K562 (cell line): ENCODE measurements at regions of chr4 and their contacts with region 1.

Region 1: GRCh38 chr4:40325189-40326019 is 9.7 kb upstream of the CHRNA9 start:
- DNase-seq: peak; percentile 72 to 79 (median 75)
- ATAC-seq: peak; percentile 95
- H3K4me3 ChIP-seq: no peak overlapping the region
- H3K27ac ChIP-seq: no peak overlapping the region
- H3K4me1 ChIP-seq: no peaks in the 10 kb centered on the region
- H3K27me3 ChIP-seq: peaks cover 7 to 19% of the 10 kb centered on the region in 2 experiments
- CTCF ChIP-seq: peak; percentile 82 to 91 (median 84)
- EP300 ChIP-seq: no peak
- POLR2A ChIP-seq: no peak
- RAD21 ChIP-seq: peak; percentile 82 to 90

Region 2: GRCh38 chr4:39855909-39856512 is 469.4 kb before region 1 on chr4:
- CTCF ChIA-PET with region 1: no interaction called
- POLR2A ChIA-PET with region 1: no interaction called
- in situ Hi-C with region 1: no loop called
- intact Hi-C with region 1: no loop called
- DNase-seq: peak in 3 of 4 experiments; percentile 4 to 15 (median 6)
- ATAC-seq: no peak
- H3K4me3 ChIP-seq: no peak overlapping the region
- H3K27ac ChIP-seq: no peak overlapping the region
- H3K4me1 ChIP-seq: no peaks in the 10 kb centered on the region
- H3K27me3 ChIP-seq: no peaks in the 10 kb centered on the region
- CTCF ChIP-seq: no peak
- EP300 ChIP-seq: peak; percentile 41; the same call in 1 of the 2 replicates
- POLR2A ChIP-seq: no peak
- RAD21 ChIP-seq: no peak

Region 3: GRCh38 chr4:40719008-40719623 is 393.7 kb after region 1 on chr4:
- CTCF ChIA-PET with region 1: no interaction called
- POLR2A ChIA-PET with region 1: no interaction called
- in situ Hi-C with region 1: no loop called
- intact Hi-C with region 1: loop called (anchors 10 kb)
- DNase-seq: peak in 2 of 4 experiments; percentile 22 to 30
- ATAC-seq: peak; percentile 88
- H3K4me3 ChIP-seq: no peak overlapping the region
- H3K27ac ChIP-seq: no peak overlapping the region
- H3K4me1 ChIP-seq: no peaks in the 10 kb centered on the region
- H3K27me3 ChIP-seq: peaks cover 0 to 10% of the 10 kb centered on the region in 2 experiments; a peak in 2 of 5 replicates
- CTCF ChIP-seq: peak; percentile 40 to 62 (median 53); a peak in 5 of 6 replicates
- EP300 ChIP-seq: no peak
- POLR2A ChIP-seq: no peak
- RAD21 ChIP-seq: peak; percentile 66 to 83

Region 4: GRCh38 chr4:40840985-40841571 is 515.7 kb after region 1 on chr4:
- CTCF ChIA-PET with region 1: no interaction called
- POLR2A ChIA-PET with region 1: no interaction called
- in situ Hi-C with region 1: no loop called
- intact Hi-C with region 1: loop called (anchors 10 kb)
- DNase-seq: peak; percentile 55 to 73 (median 64)
- ATAC-seq: peak; percentile 95
- H3K4me3 ChIP-seq: no peak overlapping the region
- H3K27ac ChIP-seq: no peak overlapping the region
- H3K4me1 ChIP-seq: no peaks in the 10 kb centered on the region; a peak in 1 of 5 replicates
- H3K27me3 ChIP-seq: peaks cover 8 to 24% of the 10 kb centered on the region in 2 experiments; a peak in 4 of 5 replicates
- CTCF ChIP-seq: peak; percentile 75 to 86 (median 76)
- EP300 ChIP-seq: no peak
- POLR2A ChIP-seq: no peak
- RAD21 ChIP-seq: peak; percentile 20 to 42; a peak in 2 of 4 replicates